GM13977 (cell line): ENCODE measurements at regions of chr17 and their contacts with region 1.

Region 1: DNA sequence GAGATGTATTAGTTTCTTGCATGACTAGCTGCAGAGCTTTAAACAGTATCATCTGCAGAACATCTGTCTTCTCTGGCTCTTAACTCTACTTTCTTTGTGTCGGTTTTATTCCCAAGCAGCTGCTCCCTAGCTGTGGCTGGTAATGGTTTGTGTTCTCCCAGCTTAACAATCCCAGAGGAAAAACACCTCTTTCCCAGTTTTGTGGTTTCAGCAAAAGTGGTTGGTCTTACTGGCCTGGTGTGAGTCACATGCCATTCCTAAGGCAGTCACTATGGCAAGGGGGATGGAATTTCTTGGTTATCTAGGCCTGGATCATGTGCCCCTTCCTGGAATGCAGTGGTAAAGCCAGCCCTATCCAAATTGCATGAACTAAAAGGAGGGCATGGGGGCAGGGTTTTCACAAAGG is 27.5 kb downstream of the OMG start:
- DNase-seq: no peak
- CTCF ChIP-seq: no peak

Region 2: GRCh38 chr17:31321481-31321880 is 51.9 kb after region 1 on chr17 and contains the start of gene EVI2A:
- in situ Hi-C with region 1: loop called (anchors 10 kb)
- DNase-seq: peak; percentile 42
- CTCF ChIP-seq: no peak